B cell (primary cell): ENCODE measurements at regions of chr10 and their contacts with region 1.

Region 1: DNA sequence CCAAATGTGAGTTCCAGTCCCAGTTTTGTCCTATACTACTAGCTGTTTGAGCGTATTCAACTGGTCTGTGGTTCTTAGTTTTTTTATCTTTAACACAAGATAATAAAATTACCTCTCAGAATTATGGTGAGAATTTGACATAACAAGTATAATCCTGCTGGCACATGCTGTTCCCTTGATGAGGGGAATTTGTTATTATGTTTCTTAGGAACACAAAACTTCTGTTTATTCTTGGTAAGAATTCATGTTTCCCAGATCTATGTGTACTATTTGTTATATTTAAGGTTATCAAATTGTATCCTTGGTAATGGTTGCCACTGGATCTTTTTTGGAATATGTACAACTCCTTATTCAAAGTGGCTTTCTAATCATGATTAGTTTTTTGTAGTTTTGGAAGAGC is 335.6 kb downstream of the ADK start:
- DNase-seq: no peak
- ATAC-seq: no peak
- H3K4me3 ChIP-seq: no peak overlapping the region
- H3K4me3 Mint-ChIP-seq: no peak overlapping the region
- H3K27ac ChIP-seq: no peak overlapping the region
- H3K27ac Mint-ChIP-seq: no peak overlapping the region
- H3K4me1 ChIP-seq: no peaks in the 10 kb centered on the region
- H3K4me1 Mint-ChIP-seq: peaks cover 3% of the 10 kb centered on the region
- H3K27me3 ChIP-seq: no peaks in the 10 kb centered on the region
- H3K27me3 Mint-ChIP-seq: no peaks in the 10 kb centered on the region
- CTCF ChIP-seq: no peak

Region 2: GRCh38 chr10:74371696-74372095 is 115.0 kb before region 1 on chr10:
- CTCF ChIA-PET with region 1: no interaction called
- POLR2A ChIA-PET with region 1: no interaction called
- intact Hi-C with region 1: no loop called
- DNase-seq: no peak
- ATAC-seq: no peak
- H3K4me3 ChIP-seq: no peak overlapping the region
- H3K4me3 Mint-ChIP-seq: no peak overlapping the region
- H3K27ac ChIP-seq: no peak overlapping the region
- H3K27ac Mint-ChIP-seq: no peak overlapping the region
- H3K4me1 ChIP-seq: no peaks in the 10 kb centered on the region
- H3K4me1 Mint-ChIP-seq: peaks cover 2% of the 10 kb centered on the region
- H3K27me3 ChIP-seq: no peaks in the 10 kb centered on the region
- H3K27me3 Mint-ChIP-seq: no peaks in the 10 kb centered on the region
- CTCF ChIP-seq: no peak

Region 3: DNA sequence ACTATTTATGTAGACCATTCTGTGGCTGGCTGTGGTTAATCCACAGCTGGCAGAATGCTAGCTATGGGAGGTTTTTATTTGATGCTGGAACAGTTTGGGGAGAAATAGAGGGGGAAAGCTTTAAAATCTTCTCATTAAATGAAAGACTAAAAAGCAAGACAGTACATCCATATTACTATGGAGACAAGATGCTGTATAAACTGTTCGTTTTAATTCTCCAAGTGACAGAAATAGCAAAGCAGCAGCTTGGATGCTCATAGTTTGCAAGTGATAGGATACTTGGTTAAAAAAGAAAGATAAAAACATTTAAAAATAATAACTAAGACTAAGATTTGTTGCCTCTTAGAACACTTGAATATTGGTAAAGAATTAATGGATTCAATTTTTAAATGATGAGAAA is 34.9 kb after region 1 on chr10:
- CTCF ChIA-PET with region 1: no interaction called
- POLR2A ChIA-PET with region 1: no interaction called
- intact Hi-C with region 1: loop called (anchors 5 kb)
- DNase-seq: no peak
- ATAC-seq: no peak
- H3K4me3 ChIP-seq: no peak overlapping the region
- H3K4me3 Mint-ChIP-seq: no peak overlapping the region
- H3K27ac ChIP-seq: no peak overlapping the region
- H3K27ac Mint-ChIP-seq: no peak overlapping the region
- H3K4me1 ChIP-seq: no peaks in the 10 kb centered on the region
- H3K4me1 Mint-ChIP-seq: peaks cover 1% of the 10 kb centered on the region
- H3K27me3 ChIP-seq: no peaks in the 10 kb centered on the region
- H3K27me3 Mint-ChIP-seq: no peaks in the 10 kb centered on the region
- CTCF ChIP-seq: no peak

Region 4: DNA sequence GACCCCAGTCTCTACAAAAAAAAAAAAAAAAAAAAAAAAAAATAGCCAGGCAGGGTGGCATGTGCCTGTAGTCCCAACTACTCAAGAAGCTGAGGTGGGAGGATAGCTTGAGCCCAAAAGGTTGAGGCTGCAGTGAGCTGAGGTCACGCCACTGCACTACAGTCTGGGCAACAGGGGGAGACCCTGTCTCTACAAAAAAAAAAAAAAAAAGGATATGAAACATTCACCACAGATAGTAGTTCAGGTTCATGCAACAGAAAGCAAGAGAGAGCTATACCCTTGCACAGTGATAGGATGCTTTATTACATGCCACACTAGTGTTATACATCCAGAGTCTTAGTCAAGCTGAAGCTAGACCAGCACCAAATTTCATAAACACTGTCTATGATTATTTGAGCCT is 191.3 kb after region 1 on chr10:
- CTCF ChIA-PET with region 1: no interaction called
- POLR2A ChIA-PET with region 1: no interaction called
- intact Hi-C with region 1: no loop called
- DNase-seq: peak; percentile 17
- ATAC-seq: peak; percentile 72
- H3K4me3 ChIP-seq: no peak overlapping the region
- H3K4me3 Mint-ChIP-seq: no peak overlapping the region
- H3K27ac ChIP-seq: no peak overlapping the region
- H3K27ac Mint-ChIP-seq: peak overlapping the region; percentile 26
- H3K4me1 ChIP-seq: peaks cover 2 to 4% of the 10 kb centered on the region in 2 donors
- H3K4me1 Mint-ChIP-seq: peaks cover 27% of the 10 kb centered on the region
- H3K27me3 ChIP-seq: no peaks in the 10 kb centered on the region
- H3K27me3 Mint-ChIP-seq: no peaks in the 10 kb centered on the region
- CTCF ChIP-seq: no peak